Ascending aorta (tissue), 2 donors: ENCODE measurements at regions of chr11 and their contacts with region 1.

Region 1: GRCh38 chr11:62771144-62772021 is at the start of gene TAF6L:
- DNase-seq: peak; percentile 94 to 99
- H3K4me3 ChIP-seq: peak within 1 kb of the TSS; percentile 73 to 84
- H3K27ac ChIP-seq: peak within 1 kb of the TSS; percentile 93 to 97
- H3K4me1 ChIP-seq: peaks cover 3 to 17% of the 10 kb centered on the region in 2 donors
- H3K27me3 ChIP-seq: no peaks in the 10 kb centered on the region
- CTCF ChIP-seq: no peak
- total RNA-seq, gene TAF6L: 51.7 TPM

Region 2: GRCh38 chr11:62645956-62646824 is 125.2 kb before region 1 on chr11 and contains the start of gene GANAB:
- intact Hi-C with region 1: no loop called
- DNase-seq: peak; percentile 97 to 100
- H3K4me3 ChIP-seq: peak within 1 kb of the TSS; percentile 66 to 92
- H3K27ac ChIP-seq: peak within 1 kb of the TSS; percentile 89 to 92
- H3K4me1 ChIP-seq: peaks cover 4 to 14% of the 10 kb centered on the region in 2 donors
- H3K27me3 ChIP-seq: no peaks in the 10 kb centered on the region
- CTCF ChIP-seq: no peak
- total RNA-seq, gene GANAB: 326 TPM

Region 3: DNA sequence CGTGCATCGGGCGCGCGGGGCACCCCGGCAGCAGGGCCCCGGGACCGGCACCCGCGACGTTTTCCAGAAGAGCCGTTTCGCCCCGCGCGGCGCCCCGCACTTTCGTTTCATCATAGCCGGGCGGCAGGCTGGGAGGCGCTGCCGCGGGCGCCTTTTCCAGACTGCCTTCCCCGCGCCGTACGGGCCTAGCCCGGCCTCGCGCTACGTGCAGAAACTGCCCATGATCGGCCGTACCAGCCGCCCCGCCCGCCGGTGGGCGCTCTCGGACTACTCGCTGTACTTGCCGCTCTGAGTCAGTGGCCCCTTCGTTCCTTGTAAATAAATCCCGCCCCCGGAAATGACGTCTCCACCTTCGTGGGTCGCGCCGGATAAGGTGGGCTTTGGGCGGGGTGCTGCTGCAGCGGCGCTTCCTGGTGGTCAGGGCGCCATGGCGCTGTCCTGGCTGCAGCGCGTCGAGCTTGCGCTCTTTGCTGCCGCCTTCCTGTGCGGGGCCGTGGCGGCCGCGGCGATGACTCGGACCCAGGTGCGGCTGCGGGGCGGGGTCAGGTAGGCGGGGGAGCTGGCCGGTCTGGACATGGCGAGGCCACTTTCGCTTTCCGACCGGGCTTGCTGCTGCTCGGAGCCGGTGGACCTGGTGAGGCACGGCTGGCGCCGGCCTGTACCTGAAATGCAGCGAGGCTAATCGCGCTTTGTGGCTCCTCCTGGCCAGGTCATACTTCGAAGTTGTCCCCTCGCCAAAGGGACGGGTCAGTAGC is 15.8 kb after region 1 on chr11 and contains the start of gene TMEM179B:
- intact Hi-C with region 1: loop called (anchors 1 kb)
- DNase-seq: peak; percentile 96 to 100
- H3K4me3 ChIP-seq: peak within 1 kb of the TSS; percentile 78 to 94
- H3K27ac ChIP-seq: peak within 1 kb of the TSS; percentile 86 to 97
- H3K4me1 ChIP-seq: peaks cover 4 to 25% of the 10 kb centered on the region in 2 donors
- H3K27me3 ChIP-seq: no peaks in the 10 kb centered on the region
- CTCF ChIP-seq: peak; percentile 59 to 75 (median 62)
- total RNA-seq, gene TMEM179B: 102 TPM

Region 4: DNA sequence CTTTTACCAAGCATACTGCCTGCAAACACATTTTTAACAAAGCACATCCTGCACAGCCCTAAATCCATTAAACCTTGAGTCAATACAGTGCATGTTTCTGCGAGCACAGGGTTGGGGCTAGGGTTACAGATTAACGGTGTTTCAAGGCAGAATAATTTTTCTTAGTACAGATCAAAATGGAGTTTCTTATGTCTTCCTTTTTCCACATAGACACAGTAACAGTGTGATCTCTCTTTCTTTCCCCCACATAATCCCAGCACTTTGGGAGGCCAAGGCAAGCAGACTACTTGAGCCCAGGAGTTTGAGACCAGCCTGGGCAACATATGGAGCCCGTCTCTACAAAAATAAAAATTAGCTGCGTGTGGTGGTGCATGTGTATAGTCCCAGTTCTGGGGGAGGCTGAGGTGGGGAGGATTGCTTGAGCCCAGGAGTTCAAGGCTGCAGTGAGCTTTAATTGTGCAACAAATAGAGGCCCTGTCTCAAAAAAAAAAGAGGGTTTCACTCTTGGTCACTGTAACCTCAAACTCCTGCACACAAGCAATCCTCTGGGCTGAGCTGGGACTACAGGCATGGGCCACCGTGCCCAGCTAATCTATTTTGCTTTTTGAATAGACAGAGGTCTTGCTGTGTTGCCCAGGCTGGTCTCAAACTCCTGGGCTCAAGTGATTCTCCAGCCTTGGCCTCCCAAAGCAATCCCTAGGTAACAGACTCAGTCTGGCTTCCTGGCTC is 89.6 kb after region 1 on chr11:
- intact Hi-C with region 1: loop called (anchors 5 kb)
- DNase-seq: no peak
- H3K4me3 ChIP-seq: no peak overlapping the region
- H3K27ac ChIP-seq: no peak overlapping the region
- H3K4me1 ChIP-seq: no peaks in the 10 kb centered on the region
- H3K27me3 ChIP-seq: no peaks in the 10 kb centered on the region
- CTCF ChIP-seq: no peak